Activated CD8-positive, alpha-beta memory T cell treated with anti-CD3 and anti-CD28 coated beads, Interleukin-2, amount 10 ng/mL, durations not matched to agents 7 days and 5 days (primary cell): ENCODE measurements at regions of chr12 and their contacts with region 1.

Region 1: DNA sequence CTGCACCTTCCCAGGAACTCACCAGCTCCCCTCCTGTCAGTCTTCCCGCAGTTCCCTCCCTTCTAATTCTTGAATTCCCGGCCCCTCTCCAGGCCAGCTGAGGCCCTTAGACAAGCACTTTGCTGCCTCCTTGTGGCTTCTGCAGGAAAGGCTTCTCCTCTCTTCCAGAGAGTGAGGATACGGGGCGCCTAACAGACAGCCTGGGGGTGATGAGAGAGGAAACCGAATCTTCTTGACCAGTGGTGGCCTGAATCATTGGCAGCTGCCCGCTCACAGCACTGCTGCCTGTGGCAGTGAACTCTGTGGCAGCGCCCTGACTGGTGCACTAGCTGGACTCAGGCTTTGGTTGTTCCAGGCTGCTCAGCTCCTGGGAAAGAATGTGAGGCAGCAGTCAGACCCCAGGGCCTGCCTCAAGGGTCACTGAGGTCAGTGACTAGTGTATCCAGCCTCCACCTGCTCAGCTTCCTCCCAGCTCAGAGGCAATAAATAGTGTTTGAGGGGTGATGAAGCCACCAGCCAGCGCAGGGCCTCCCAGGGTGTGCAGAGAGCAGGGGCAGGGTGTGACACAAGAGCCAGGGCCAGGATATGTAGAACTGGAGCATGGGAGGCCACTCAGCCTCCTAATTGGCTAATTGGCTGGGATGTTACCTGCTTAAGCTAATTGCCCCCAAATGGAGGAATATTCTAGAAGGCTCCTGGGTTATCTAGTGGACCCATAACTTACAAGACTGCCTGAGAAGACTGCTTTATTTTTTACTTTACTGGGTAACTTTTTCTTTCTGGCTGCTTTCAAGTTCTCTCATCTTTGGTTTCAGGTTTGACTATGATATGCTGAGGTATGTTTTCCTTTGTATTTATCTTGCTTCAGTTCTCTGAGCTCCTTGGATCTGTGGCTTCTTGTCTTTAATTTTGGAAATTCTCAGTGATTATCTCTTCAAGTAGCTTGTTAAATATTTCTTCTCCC is 12.9 kb upstream of the MCRS1 start:
- DNase-seq: peak; percentile 79
- ATAC-seq: peak; percentile 87
- H3K4me3 Mint-ChIP-seq: no peak overlapping the region
- H3K27ac Mint-ChIP-seq: no peak overlapping the region
- H3K4me1 Mint-ChIP-seq: peaks cover 20% of the 10 kb centered on the region
- H3K27me3 Mint-ChIP-seq: no peaks in the 10 kb centered on the region

Region 2: DNA sequence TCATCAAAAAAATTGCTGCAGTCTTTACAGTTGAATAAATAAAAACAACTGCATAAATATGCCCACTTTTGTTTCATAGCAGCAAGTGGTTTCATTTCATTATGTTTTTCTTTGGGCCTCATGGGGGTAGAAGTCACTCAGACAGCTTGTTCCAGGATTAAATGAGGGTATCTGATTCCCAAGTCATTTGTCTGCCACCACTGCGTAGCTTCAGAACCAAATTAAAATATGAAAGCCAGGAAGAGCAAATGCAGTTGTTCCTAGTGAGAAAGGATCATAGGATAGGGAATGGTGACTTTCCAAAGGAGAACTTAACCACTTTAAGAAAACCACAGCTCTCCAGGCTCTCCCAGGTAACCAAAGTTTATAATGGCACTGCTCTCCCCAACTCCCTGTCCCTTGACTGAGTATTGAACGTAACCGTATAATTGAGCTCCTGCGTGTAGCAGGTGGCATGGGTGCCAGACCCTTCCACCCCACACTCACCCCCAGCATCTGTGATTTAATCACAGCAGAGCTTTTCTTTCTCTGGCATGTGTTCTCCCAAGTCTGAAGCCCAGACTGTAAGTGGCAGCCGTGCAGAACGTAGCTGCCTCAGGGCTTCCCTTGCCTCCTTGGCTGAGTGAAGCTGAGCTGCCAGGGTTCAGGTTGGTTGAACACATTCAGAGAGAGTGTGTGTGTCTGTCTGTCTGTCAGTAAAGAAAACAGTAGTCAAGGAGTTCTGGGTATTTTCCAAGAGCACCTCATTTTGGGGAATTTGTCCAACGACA is 53.3 kb before region 1 on chr12:
- CTCF ChIA-PET with region 1: interaction called, 14 read pairs
- DNase-seq: peak; percentile 34
- ATAC-seq: no peak
- H3K4me3 Mint-ChIP-seq: no peak overlapping the region
- H3K27ac Mint-ChIP-seq: no peak overlapping the region
- H3K4me1 Mint-ChIP-seq: peaks cover 3% of the 10 kb centered on the region
- H3K27me3 Mint-ChIP-seq: no peaks in the 10 kb centered on the region

Region 3: DNA sequence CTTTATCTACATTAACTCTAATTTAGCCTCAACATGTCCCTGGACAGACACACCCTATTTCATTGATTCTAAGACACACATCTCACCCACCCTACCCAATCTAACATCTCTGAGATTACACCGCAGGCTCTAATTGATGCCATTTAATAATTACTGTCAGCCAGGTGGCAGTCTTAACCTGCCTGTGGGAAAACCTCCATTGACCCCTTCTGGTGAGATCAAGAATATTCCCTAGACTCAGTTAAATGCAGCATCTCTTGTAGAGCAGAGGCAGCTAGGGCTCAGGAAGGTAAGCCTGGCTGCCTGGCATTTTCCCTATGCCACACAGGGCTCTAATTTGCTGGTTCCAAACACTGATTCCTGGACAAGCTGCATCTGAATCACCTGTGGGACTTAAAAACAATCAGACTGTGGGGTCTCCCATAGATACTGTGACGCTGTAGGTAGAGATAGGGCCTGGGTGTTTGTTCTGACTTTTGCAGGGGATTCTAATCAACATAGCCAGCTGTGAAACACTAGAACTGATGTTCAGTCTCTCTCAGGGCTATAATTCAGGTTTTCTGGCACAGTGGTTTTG is 27.3 kb before region 1 on chr12:
- CTCF ChIA-PET with region 1: interaction called, 96 read pairs
- DNase-seq: no peak
- ATAC-seq: peak; percentile 74
- H3K4me3 Mint-ChIP-seq: no peak overlapping the region
- H3K27ac Mint-ChIP-seq: no peak overlapping the region
- H3K4me1 Mint-ChIP-seq: peaks cover 3% of the 10 kb centered on the region
- H3K27me3 Mint-ChIP-seq: peaks cover 17% of the 10 kb centered on the region

Region 4: DNA sequence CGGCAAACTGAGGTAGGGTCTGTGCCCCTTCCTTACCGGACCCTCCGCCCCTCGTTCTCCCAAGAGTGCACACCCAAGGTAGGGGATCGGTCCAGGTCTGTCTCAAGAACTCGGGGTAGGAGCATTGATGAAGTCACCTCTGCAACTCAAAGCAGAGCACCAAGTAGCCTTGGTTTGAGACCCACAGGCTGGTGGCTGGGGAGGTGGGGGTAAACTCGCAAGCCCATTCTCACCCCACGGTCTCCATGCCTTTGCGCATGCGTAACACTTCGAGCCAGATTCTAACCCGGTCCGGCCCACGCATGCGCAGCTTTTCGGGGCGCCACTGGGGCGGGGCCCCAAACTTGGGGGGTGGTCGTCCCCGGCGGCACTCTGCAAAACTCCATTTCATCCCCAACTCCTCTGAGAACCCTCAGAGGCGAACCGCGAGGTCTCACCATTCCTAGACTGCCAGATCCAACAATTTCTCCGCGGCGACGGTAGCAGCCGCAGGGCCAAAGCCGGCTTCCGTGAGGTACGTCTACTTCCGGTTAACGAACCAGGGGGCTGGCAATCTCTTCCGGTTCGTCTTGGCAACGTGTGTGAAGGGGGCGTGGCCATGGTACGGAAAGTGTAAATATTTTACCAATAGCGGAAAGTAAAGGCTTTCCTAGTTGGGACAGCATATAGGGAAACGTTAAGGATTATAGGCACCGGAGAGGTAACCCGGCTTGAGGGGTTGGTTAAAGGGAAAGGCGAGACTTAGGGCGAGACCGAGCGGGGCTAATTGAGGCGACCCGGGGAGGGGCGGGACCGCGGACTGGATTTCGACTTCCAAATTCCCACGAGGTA is 13.0 kb before region 1 on chr12 and contains the start of gene MCRS1:
- CTCF ChIA-PET with region 1: interaction called, 46 read pairs
- DNase-seq: peak; percentile 93
- ATAC-seq: peak; percentile 81
- H3K4me3 Mint-ChIP-seq: peak within 1 kb of the TSS; percentile 88
- H3K27ac Mint-ChIP-seq: peak within 1 kb of the TSS; percentile 96
- H3K4me1 Mint-ChIP-seq: peaks cover 57% of the 10 kb centered on the region
- H3K27me3 Mint-ChIP-seq: no peaks in the 10 kb centered on the region
- total RNA-seq, gene MCRS1: 70.1 to 72.1 TPM